ENCODE measurements at regions of chr19 and their contacts with region 1.

Region 1: DNA sequence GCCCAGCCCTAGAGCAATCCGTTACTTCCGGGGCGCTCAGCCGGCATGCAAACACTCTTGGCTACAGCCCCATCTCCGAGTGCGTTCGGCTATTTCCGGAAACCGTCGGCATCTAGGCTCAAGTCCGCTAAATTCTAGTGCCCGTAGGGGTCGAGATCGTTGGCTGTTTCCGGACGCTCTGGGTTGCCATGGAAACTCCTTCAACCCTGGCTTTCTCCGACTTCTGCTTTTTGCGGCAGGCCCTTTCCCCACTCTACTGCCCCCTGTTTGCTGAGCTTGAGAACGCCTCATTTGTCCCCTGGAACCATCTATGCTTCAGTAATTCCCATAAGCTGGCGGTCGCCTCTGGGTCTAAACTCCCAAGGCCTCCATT is 533 bp upstream of the PIK3R2 start:
- DNase-seq: peak; percentile 97
- ATAC-seq: peak; percentile 70
- H3K4me3 Mint-ChIP-seq: peak overlapping the region; percentile 89
- H3K27ac Mint-ChIP-seq: peak overlapping the region; percentile 94
- H3K4me1 Mint-ChIP-seq: peaks cover 22% of the 10 kb centered on the region
- H3K27me3 Mint-ChIP-seq: no peaks in the 10 kb centered on the region
- CTCF ChIP-seq: no peak

Region 2: DNA sequence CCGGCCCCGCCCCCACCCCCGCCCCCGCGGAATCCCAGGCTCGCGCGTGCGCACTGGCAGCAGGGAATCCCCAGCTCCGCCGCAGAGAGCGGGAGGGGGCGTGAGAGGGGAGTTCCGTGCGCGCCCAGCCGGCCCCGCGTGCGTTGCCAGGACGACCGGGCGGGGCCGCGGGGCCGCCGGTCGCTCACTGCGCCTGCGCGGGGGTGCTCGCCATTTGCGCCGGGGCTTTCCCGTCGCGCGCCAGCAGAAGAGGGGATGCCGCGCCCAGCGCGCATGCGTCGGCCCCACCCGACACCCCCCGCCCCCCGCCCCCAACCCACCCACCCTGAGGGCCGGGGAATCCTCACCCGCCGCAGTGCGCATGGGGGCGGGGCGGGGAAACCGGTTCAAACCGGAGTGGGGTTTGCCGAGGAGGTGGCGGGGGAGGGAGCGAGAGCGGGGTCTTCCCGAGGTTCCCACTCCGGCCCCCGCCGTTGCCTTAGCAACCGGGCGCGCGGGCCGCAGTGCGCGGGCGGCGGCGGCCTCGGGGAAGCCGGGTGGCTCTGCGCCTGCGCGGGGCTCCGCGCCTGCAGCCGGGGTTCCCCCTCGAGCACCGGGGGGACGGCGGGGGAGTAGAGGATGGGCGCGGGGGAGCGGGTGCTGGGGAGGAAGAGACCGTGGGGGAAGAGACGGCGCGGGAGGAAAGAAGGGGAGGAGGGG is 204.5 kb before region 1 on chr19:
- CTCF ChIA-PET with region 1: no interaction called
- POLR2A ChIA-PET with region 1: no interaction called
- intact Hi-C with region 1: loop called (anchors 1 kb)
- DNase-seq: peak; percentile 98
- ATAC-seq: peak; percentile 63
- H3K4me3 Mint-ChIP-seq: peak overlapping the region; percentile 74
- H3K27ac Mint-ChIP-seq: no peak overlapping the region
- H3K4me1 Mint-ChIP-seq: peaks cover 59% of the 10 kb centered on the region
- H3K27me3 Mint-ChIP-seq: peaks cover 12% of the 10 kb centered on the region
- CTCF ChIP-seq: no peak

Region 3: GRCh38 chr19:18044825-18045304 is 107.6 kb before region 1 on chr19:
- CTCF ChIA-PET with region 1: interaction called, 3 read pairs
- POLR2A ChIA-PET with region 1: interaction called, 17 read pairs
- intact Hi-C with region 1: no loop called
- DNase-seq: peak; percentile 72
- ATAC-seq: peak; percentile 92
- H3K4me3 Mint-ChIP-seq: peak overlapping the region; percentile 78
- H3K27ac Mint-ChIP-seq: peak overlapping the region; percentile 96
- H3K4me1 Mint-ChIP-seq: peaks cover 55% of the 10 kb centered on the region
- H3K27me3 Mint-ChIP-seq: no peaks in the 10 kb centered on the region
- CTCF ChIP-seq: no peak

Region 4: DNA sequence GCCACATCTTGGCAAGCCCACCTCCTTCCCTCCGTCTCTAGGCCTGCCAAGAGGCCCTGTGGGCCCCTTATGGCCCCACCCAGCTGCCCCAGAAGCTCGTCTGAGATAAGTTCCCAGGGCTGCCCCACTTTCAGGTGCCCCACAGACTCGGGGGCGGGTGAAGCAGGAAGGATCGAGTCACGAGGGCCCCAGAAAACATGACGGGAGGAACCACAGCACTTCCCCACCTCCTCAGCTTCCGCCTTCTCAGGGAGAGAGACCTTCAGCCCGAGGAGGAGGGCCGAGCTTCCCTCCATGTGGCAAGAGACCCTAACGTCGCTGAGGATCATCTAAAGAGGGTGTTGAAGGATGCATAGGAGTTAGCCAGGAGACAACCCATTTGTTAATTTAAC is 61.2 kb before region 1 on chr19:
- CTCF ChIA-PET with region 1: no interaction called
- POLR2A ChIA-PET with region 1: interaction called, 13 read pairs
- intact Hi-C with region 1: no loop called
- DNase-seq: peak; percentile 58
- ATAC-seq: peak; percentile 68
- H3K4me3 Mint-ChIP-seq: peak overlapping the region; percentile 67
- H3K27ac Mint-ChIP-seq: peak overlapping the region; percentile 97
- H3K4me1 Mint-ChIP-seq: peaks cover 60% of the 10 kb centered on the region
- H3K27me3 Mint-ChIP-seq: no peaks in the 10 kb centered on the region
- CTCF ChIP-seq: no peak

Region 5: GRCh38 chr19:18167975-18168645 is 15.7 kb after region 1 on chr19:
- CTCF ChIA-PET with region 1: no interaction called
- POLR2A ChIA-PET with region 1: interaction called, 20 read pairs
- intact Hi-C with region 1: loop called (anchors 1 kb)
- DNase-seq: peak; percentile 52
- ATAC-seq: peak; percentile 34
- H3K4me3 Mint-ChIP-seq: peak overlapping the region; percentile 66
- H3K27ac Mint-ChIP-seq: peak overlapping the region; percentile 82
- H3K4me1 Mint-ChIP-seq: peaks cover 53% of the 10 kb centered on the region
- H3K27me3 Mint-ChIP-seq: no peaks in the 10 kb centered on the region
- CTCF ChIP-seq: peak; percentile 44

Region 6: GRCh38 chr19:18192673-18193387 is 40.4 kb after region 1 on chr19 and contains the start of gene MPV17L2:
- CTCF ChIA-PET with region 1: no interaction called
- POLR2A ChIA-PET with region 1: interaction called, 11 read pairs
- intact Hi-C with region 1: loop called (anchors 1 kb)
- DNase-seq: peak; percentile 90
- ATAC-seq: peak; percentile 83
- H3K4me3 Mint-ChIP-seq: peak within 1 kb of the TSS; percentile 87
- H3K27ac Mint-ChIP-seq: peak within 1 kb of the TSS; percentile 95
- H3K4me1 Mint-ChIP-seq: peaks cover 40% of the 10 kb centered on the region
- H3K27me3 Mint-ChIP-seq: no peaks in the 10 kb centered on the region
- CTCF ChIP-seq: no peak
- total RNA-seq, gene MPV17L2: 17.3 and 17.9 TPM in 2 replicates

Region 7: GRCh38 chr19:18340190-18340989 is 188.0 kb after region 1 on chr19 and contains the start of gene PGPEP1:
- CTCF ChIA-PET with region 1: no interaction called
- POLR2A ChIA-PET with region 1: no interaction called
- intact Hi-C with region 1: no loop called
- DNase-seq: peak; percentile 70
- ATAC-seq: peak; percentile 72
- H3K4me3 Mint-ChIP-seq: peak within 1 kb of the TSS; percentile 80
- H3K27ac Mint-ChIP-seq: peak within 1 kb of the TSS; percentile 3
- H3K4me1 Mint-ChIP-seq: peaks cover 13% of the 10 kb centered on the region
- H3K27me3 Mint-ChIP-seq: peaks cover 6% of the 10 kb centered on the region
- CTCF ChIP-seq: no peak
- total RNA-seq, gene PGPEP1: 5.6 and 6.9 TPM in 2 replicates

Region 8: DNA sequence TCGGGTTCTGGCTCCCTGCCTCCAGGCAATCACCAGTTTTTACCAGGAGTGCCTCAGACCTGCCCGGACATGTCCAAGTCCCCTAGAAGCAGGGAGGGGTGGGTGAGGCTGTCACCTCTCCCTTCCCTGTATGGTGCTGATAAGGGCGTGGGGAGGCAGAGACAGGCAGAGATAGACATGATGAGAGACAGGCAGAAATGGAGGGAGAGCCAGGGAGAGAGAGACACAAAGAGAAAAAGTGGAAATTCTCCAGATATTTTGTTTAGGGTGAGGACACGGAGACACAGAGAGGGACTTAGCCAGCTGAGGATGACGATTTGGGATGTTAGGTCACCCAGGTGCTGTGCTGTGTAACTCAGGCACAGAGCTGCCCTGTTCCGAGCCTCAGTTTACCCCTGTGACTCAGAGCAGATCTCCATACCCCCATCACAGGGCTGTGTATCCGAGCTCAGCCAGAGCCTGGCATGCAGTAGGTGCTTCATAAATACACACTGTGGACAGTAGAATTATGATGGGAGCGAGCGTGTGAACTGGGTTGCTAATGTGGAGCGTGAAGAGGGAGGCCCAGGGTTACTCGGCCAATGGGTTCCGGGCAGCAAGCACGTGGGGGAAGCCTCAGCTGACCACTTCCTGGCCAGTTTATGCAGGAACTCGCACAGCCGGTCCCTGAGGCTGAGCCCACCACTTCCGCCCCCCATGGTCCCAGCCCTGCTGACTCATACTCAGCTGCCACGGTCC is 221.6 kb after region 1 on chr19:
- CTCF ChIA-PET with region 1: no interaction called
- POLR2A ChIA-PET with region 1: no interaction called
- intact Hi-C with region 1: no loop called
- DNase-seq: peak; percentile 50
- ATAC-seq: peak; percentile 86
- H3K4me3 Mint-ChIP-seq: peak overlapping the region; percentile 7
- H3K27ac Mint-ChIP-seq: peak overlapping the region; percentile 41
- H3K4me1 Mint-ChIP-seq: peaks cover 25% of the 10 kb centered on the region
- H3K27me3 Mint-ChIP-seq: no peaks in the 10 kb centered on the region
- CTCF ChIP-seq: no peak